Left ventricle myocardium inferior (tissue), 1 donor: ENCODE measurements at regions of chr12 and their contacts with region 1.

Region 1: GRCh38 chr12:13864081-13864673 is 117.2 kb downstream of the GRIN2B start:
- DNase-seq: peak; percentile 74
- H3K4me3 ChIP-seq: no peak overlapping the region
- H3K27ac ChIP-seq: no peak overlapping the region
- H3K4me1 ChIP-seq: no peaks in the 10 kb centered on the region
- H3K27me3 ChIP-seq: peaks cover 40% of the 10 kb centered on the region
- CTCF ChIP-seq: peak; percentile 94

Region 2: GRCh38 chr12:13161172-13161571 is 703.0 kb before region 1 on chr12:
- intact Hi-C with region 1: no loop called
- DNase-seq: no peak
- H3K4me3 ChIP-seq: no peak overlapping the region
- H3K27ac ChIP-seq: no peak overlapping the region
- H3K4me1 ChIP-seq: peaks cover 13% of the 10 kb centered on the region
- H3K27me3 ChIP-seq: no peaks in the 10 kb centered on the region
- CTCF ChIP-seq: peak; percentile 16

Region 3: GRCh38 chr12:14167005-14167628 is 302.9 kb after region 1 on chr12:
- intact Hi-C with region 1: loop called (anchors 5 kb)
- DNase-seq: no peak
- H3K4me3 ChIP-seq: no peak overlapping the region
- H3K27ac ChIP-seq: no peak overlapping the region
- H3K4me1 ChIP-seq: no peaks in the 10 kb centered on the region
- H3K27me3 ChIP-seq: peaks cover 18% of the 10 kb centered on the region
- CTCF ChIP-seq: peak; percentile 94